Vagina (tissue), 2 donors: ENCODE measurements at regions of chr4 and their contacts with region 1.

Region 1: GRCh38 chr4:128558896-128559679 is 250.4 kb upstream of the JADE1 start:
- DNase-seq: no peak
- H3K4me3 ChIP-seq: no peak overlapping the region
- H3K27ac ChIP-seq: peak overlapping the region; percentile 28
- H3K4me1 ChIP-seq: peaks cover 36% of the 10 kb centered on the region
- H3K27me3 ChIP-seq: no peaks in the 10 kb centered on the region
- CTCF ChIP-seq: no peak
- POLR2A ChIP-seq: no peak

Region 2: DNA sequence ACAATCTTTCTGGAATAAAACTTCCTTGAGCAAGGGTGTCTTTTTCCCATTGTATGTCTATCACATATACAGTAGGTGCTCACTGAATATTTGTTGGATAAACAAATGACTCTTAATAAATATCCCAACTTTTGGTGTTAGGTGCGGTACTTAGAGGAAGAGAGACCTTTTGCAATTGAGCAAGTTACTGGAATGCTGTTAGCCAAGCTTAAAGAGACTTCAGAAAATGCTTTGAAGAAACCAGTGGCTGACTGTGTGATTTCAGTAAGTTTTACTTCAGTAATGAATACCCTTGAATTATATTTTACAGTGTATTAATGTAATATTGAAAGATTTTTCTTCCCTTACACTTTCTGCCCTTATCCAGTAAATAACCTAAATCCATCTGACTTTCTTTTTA is 760.6 kb before region 1 on chr4:
- intact Hi-C with region 1: no loop called
- DNase-seq: no peak
- H3K4me3 ChIP-seq: no peak overlapping the region
- H3K27ac ChIP-seq: no peak overlapping the region
- H3K4me1 ChIP-seq: no peaks in the 10 kb centered on the region
- H3K27me3 ChIP-seq: no peaks in the 10 kb centered on the region
- CTCF ChIP-seq: no peak
- POLR2A ChIP-seq: no peak

Region 3: GRCh38 chr4:128379860-128380259 is 179.2 kb before region 1 on chr4:
- intact Hi-C with region 1: loop called (anchors 10 kb)
- DNase-seq: no peak
- H3K4me3 ChIP-seq: no peak overlapping the region
- H3K27ac ChIP-seq: no peak overlapping the region
- H3K4me1 ChIP-seq: peaks cover 20% of the 10 kb centered on the region
- H3K27me3 ChIP-seq: no peaks in the 10 kb centered on the region
- CTCF ChIP-seq: peak in 1 of 3 experiments; percentile 37
- POLR2A ChIP-seq: no peak

Region 4: GRCh38 chr4:128583753-128584712 is 24.9 kb after region 1 on chr4:
- intact Hi-C with region 1: no loop called
- DNase-seq: no peak
- H3K4me3 ChIP-seq: no peak overlapping the region
- H3K27ac ChIP-seq: no peak overlapping the region
- H3K4me1 ChIP-seq: no peaks in the 10 kb centered on the region
- H3K27me3 ChIP-seq: no peaks in the 10 kb centered on the region
- CTCF ChIP-seq: no peak
- POLR2A ChIP-seq: no peak

Region 5: GRCh38 chr4:128809477-128810330 is 250.6 kb after region 1 on chr4 and contains the start of gene JADE1:
- intact Hi-C with region 1: loop called (anchors 10 kb)
- DNase-seq: peak in 1 of 2 donors; percentile 91
- H3K4me3 ChIP-seq: peak within 1 kb of the TSS; percentile 58 to 80
- H3K27ac ChIP-seq: peak within 1 kb of the TSS; percentile 89
- H3K4me1 ChIP-seq: peaks cover 20% of the 10 kb centered on the region
- H3K27me3 ChIP-seq: no peaks in the 10 kb centered on the region
- CTCF ChIP-seq: peak in 2 of 3 experiments; percentile 9 to 52
- POLR2A ChIP-seq: peak in 1 of 2 donors; percentile 55
- total RNA-seq, gene JADE1: 29.0 TPM